K562 (cell line): ENCODE measurements at regions of chr4 and their contacts with region 1.

Region 1: GRCh38 chr4:1746265-1746691 is 25.0 kb downstream of the TACC3 start:
- DNase-seq: peak; percentile 83 to 90 (median 87)
- ATAC-seq: peak; percentile 89
- H3K4me3 ChIP-seq: no peak overlapping the region
- H3K27ac ChIP-seq: no peak overlapping the region
- H3K4me1 ChIP-seq: peaks cover 0 to 73% of the 10 kb centered on the region in 2 experiments; a peak in 2 of 5 replicates
- H3K27me3 ChIP-seq: no peaks in the 10 kb centered on the region
- CTCF ChIP-seq: peak; percentile 89 to 99 (median 94)
- EP300 ChIP-seq: no peak
- POLR2A ChIP-seq: no peak
- RAD21 ChIP-seq: peak; percentile 52 to 79

Region 2: DNA sequence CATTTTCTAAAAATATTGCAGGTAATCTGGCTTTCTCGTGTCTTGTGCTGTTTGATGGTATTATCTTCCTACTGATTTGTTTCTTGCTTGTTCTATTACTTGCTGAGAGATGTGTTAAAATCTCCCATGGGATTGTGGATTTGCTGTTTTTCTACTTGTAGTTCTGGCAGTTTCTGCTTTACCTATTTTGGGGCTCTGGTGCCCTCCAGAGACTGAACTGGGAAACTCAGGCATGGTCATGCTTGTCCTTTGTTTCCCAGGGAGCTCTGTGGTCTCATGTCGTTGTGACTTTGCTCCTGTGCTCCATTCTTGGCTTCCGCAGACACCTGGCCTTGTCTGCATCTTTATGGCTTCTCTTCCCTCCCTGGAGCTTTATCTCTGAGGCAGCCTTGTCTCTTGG is 164.4 kb after region 1 on chr4:
- CTCF ChIA-PET with region 1: interaction called, 6 read pairs
- POLR2A ChIA-PET with region 1: no interaction called
- in situ Hi-C with region 1: no loop called
- intact Hi-C with region 1: loop called (anchors 5 kb)
- DNase-seq: peak; percentile 34 to 72 (median 48)
- ATAC-seq: peak; percentile 88
- H3K4me3 ChIP-seq: no peak overlapping the region
- H3K27ac ChIP-seq: no peak overlapping the region
- H3K4me1 ChIP-seq: peaks cover 5 to 15% of the 10 kb centered on the region in 2 experiments; a peak in 3 of 5 replicates
- H3K27me3 ChIP-seq: no peaks in the 10 kb centered on the region
- CTCF ChIP-seq: peak; percentile 62 to 75 (median 70)
- EP300 ChIP-seq: no peak
- POLR2A ChIP-seq: no peak
- RAD21 ChIP-seq: peak; percentile 42 to 72; a peak in 3 of 4 replicates

Region 3: DNA sequence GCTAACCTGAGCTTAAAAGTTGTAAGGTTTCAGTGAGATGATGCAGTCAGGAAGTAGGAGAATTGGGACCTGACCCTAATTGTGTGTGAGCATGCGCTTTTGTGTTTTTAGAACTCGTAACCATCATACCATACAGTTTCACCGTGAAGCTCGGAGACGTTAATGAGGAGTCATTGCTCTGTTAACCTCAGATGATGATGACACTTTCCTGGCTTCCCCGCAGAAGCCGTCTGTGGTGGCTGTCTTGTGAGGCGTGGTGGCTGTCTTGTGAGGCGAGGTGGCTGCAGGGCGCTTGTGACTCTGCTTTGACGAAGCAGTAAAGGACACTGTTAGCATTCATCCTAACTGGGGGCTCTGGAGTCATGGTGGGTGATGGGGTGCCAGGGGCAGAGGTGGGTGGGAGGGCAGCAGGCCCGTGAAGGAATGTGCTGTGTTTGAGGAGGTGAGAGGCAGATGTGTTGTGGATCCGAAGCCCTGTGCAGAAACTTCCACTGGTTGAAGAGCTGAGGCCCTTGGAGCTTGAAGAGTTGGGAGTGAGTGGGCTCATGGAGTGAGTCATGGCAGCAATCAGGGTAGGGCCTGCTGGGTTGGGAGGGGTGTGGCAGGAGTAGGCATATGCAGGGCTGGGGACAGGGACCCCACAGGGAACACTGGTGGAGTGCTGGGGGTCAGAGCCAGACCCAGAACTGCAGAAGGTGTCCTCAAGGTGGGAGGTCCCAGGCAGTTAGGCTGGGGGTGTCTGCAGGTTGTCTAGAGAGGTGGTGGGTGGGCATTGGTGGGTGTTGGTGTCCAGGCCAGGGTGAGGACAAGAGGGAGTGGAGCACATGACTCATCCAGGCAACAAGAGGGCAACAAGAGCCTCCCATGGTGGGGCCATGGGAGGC is 182.3 kb after region 1 on chr4:
- CTCF ChIA-PET with region 1: no interaction called
- POLR2A ChIA-PET with region 1: no interaction called
- in situ Hi-C with region 1: no loop called
- intact Hi-C with region 1: no loop called
- DNase-seq: no peak
- ATAC-seq: no peak; the same call in 2 of the 3 replicates
- H3K4me3 ChIP-seq: no peak overlapping the region
- H3K27ac ChIP-seq: no peak overlapping the region
- H3K4me1 ChIP-seq: no peaks in the 10 kb centered on the region; a peak in 1 of 5 replicates
- H3K27me3 ChIP-seq: no peaks in the 10 kb centered on the region
- CTCF ChIP-seq: no peak
- EP300 ChIP-seq: no peak
- POLR2A ChIP-seq: no peak
- RAD21 ChIP-seq: no peak

Region 4: GRCh38 chr4:2186133-2186864 is 440.0 kb after region 1 on chr4:
- CTCF ChIA-PET with region 1: no interaction called
- POLR2A ChIA-PET with region 1: no interaction called
- in situ Hi-C with region 1: no loop called
- intact Hi-C with region 1: loop called (anchors 5 kb)
- DNase-seq: peak in 1 of 4 experiments; percentile 36
- ATAC-seq: peak; percentile 84
- H3K4me3 ChIP-seq: no peak overlapping the region
- H3K27ac ChIP-seq: no peak overlapping the region
- H3K4me1 ChIP-seq: no peaks in the 10 kb centered on the region
- H3K27me3 ChIP-seq: no peaks in the 10 kb centered on the region
- CTCF ChIP-seq: peak; percentile 55 to 65 (median 59)
- EP300 ChIP-seq: no peak
- POLR2A ChIP-seq: no peak
- RAD21 ChIP-seq: peak in 1 of 2 experiments; percentile 67; a peak in 2 of 4 replicates

Region 5: GRCh38 chr4:2341261-2341841 is 595.1 kb after region 1 on chr4:
- CTCF ChIA-PET with region 1: no interaction called
- POLR2A ChIA-PET with region 1: no interaction called
- in situ Hi-C with region 1: no loop called
- intact Hi-C with region 1: no loop called
- DNase-seq: no peak
- ATAC-seq: no peak
- H3K4me3 ChIP-seq: no peak overlapping the region
- H3K27ac ChIP-seq: no peak overlapping the region
- H3K4me1 ChIP-seq: peaks cover 0 to 10% of the 10 kb centered on the region in 2 experiments; a peak in 2 of 5 replicates
- H3K27me3 ChIP-seq: no peaks in the 10 kb centered on the region
- CTCF ChIP-seq: no peak
- EP300 ChIP-seq: no peak
- POLR2A ChIP-seq: no peak
- RAD21 ChIP-seq: no peak